ENCODE measurements at regions of chr9 and their contacts with region 1.

Region 1: DNA sequence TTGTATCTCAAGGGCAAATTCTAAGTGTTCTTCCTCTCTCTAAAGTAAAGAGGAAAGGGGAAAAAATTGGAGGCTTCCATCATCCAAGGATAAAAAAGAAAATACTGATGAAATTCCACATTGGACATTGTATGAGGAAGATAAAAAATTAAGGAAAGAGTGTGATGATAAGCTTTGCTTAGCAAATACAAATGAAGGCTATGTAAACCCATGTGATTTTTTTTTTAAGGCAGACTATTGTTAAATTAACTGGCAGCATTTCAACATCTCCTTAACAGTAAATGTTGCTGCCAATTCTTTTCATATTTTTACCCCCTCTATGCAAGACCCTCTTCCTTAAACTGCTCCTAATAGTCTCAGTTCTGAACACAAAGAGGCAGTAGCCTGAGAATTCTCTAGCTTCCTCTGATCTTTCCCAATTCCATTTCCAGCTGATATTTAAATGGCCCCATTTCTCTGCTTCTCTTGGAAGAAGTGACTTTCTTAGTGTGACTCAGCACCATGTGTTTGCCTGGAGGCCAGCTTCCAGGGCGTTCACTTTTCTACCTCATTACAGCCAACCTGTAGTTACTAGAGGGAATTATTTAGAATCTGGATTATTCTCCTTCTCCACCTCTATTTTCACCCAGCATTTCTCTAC is 159.7 kb downstream of the TLE1 start:
- DNase-seq: no peak
- H3K4me3 Mint-ChIP-seq: no peak overlapping the region
- H3K27ac Mint-ChIP-seq: no peak overlapping the region
- H3K4me1 Mint-ChIP-seq: no peaks in the 10 kb centered on the region
- H3K27me3 Mint-ChIP-seq: peaks cover 2% of the 10 kb centered on the region

Region 2: DNA sequence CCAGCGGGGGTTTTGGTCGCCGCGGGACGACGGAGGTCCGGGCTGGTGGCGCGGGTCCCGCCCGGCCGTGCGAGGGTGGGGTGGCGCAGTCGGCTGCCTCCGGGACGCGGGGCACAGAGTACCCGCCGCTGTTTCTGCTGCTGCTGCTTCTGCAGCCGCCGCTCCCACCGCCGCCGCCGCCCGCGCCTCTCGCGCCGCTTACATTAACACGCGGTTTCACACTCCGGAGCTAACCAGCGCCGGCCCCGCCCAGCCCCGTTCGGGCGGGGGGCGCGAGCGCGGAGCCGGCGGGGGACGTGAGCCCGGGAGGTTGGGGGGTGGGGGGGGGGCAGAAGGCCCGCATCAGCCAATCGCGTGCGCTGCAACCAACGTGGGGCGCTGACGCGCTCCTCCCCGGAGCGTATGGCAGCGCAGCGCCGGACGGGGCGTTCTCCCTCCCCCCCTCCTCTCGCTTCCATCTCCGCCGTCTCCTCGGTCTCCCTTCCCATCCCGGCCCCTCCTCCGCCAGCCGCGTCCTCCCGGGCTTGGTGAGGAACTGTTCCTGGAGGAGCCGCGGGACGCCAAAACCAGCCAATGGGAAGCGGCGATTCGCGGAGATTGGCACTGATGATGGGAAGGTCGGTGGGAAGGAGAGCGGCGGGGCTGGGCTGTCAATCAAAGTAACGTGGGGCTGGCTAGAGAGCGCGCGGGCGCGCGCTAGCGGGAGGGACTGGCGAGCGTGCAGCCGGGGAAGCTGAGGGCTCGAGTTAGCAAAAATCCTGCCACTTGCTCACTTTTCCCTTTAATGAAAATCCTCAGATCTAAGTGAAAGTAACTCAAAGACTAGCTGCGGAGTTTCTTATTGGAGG is 159.9 kb after region 1 on chr9 and contains the start of gene TLE1:
- CTCF ChIA-PET with region 1: no interaction called
- POLR2A ChIA-PET with region 1: no interaction called
- intact Hi-C with region 1: loop called (anchors 10 kb)
- DNase-seq: peak; percentile 77
- H3K4me3 Mint-ChIP-seq: peak within 1 kb of the TSS; percentile 73
- H3K27ac Mint-ChIP-seq: no peak within 1 kb of the TSS
- H3K4me1 Mint-ChIP-seq: peaks cover 14% of the 10 kb centered on the region
- H3K27me3 Mint-ChIP-seq: peaks cover 20% of the 10 kb centered on the region
- total RNA-seq, gene TLE1: 0.17 to 0.22 TPM

Measured in activated CD4-positive, alpha-beta memory T cell treated with anti-CD3 and anti-CD28 coated beads for 36 hours (primary cell).